ENCODE measurements at regions of chr16 and their contacts with region 1.

Region 1: GRCh38 chr16:70653809-70654771 is 7.7 kb downstream of the IL34 start:
- DNase-seq: peak; percentile 88
- ATAC-seq: peak; percentile 86
- H3K4me3 Mint-ChIP-seq: no peak overlapping the region
- H3K27ac Mint-ChIP-seq: no peak overlapping the region
- H3K4me1 Mint-ChIP-seq: peaks cover 4% of the 10 kb centered on the region
- H3K27me3 Mint-ChIP-seq: no peaks in the 10 kb centered on the region

Region 2: GRCh38 chr16:69796351-69797118 is 857.6 kb before region 1 on chr16:
- CTCF ChIA-PET with region 1: no interaction called
- POLR2A ChIA-PET with region 1: no interaction called
- intact Hi-C with region 1: loop called in 1 of 2 experiments (anchors 10 kb)
- DNase-seq: peak; percentile 30
- ATAC-seq: peak; percentile 86
- H3K4me3 Mint-ChIP-seq: no peak overlapping the region
- H3K27ac Mint-ChIP-seq: no peak overlapping the region
- H3K4me1 Mint-ChIP-seq: no peaks in the 10 kb centered on the region
- H3K27me3 Mint-ChIP-seq: no peaks in the 10 kb centered on the region

Region 3: DNA sequence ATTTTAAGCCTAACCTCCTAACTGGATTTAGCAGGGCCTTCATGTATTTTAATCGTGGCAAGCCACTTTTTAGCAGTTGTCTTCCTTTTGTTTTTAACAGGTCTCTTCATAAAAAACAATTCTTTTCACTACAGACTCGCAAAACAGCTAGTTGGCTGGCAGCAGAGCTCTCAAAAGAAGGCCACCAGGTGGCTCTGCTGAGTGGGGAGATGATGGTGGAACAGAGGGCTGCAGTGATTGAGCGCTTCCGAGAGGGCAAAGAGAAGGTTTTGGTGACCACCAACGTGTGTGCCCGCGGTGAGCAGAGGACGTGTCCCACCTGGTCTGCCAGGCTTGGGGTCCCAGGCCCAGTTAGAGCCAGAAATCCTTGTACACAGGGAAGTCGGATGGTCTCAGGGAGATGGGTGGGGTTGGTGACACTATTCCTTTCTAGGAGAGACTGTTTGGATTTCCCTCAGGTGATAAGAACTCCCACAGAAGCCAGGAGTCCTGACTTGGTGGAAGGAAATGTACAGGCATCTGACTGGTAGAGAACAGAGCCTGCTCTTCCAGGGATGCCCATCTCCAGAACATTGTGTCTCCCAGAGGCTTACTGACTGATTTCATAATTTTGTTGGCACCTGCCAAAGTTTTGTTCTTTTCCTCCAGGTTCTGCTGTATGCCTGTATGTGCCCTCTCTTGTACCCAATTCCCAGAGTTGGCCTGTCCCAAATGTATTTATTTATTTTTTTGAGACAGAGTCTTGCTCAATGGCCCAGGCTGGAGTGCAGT is 322.3 kb before region 1 on chr16:
- CTCF ChIA-PET with region 1: interaction called, 4 read pairs
- POLR2A ChIA-PET with region 1: no interaction called
- intact Hi-C with region 1: loop called in 1 of 2 experiments (anchors 1 kb)
- DNase-seq: peak; percentile 34
- ATAC-seq: no peak
- H3K4me3 Mint-ChIP-seq: no peak overlapping the region
- H3K27ac Mint-ChIP-seq: no peak overlapping the region
- H3K4me1 Mint-ChIP-seq: no peaks in the 10 kb centered on the region
- H3K27me3 Mint-ChIP-seq: no peaks in the 10 kb centered on the region

Region 4: GRCh38 chr16:70380861-70381603 is 273.1 kb before region 1 on chr16:
- CTCF ChIA-PET with region 1: interaction called, 8 read pairs
- POLR2A ChIA-PET with region 1: no interaction called
- intact Hi-C with region 1: loop called (anchors 5 kb)
- DNase-seq: peak; percentile 98
- ATAC-seq: peak; percentile 93
- H3K4me3 Mint-ChIP-seq: peak overlapping the region; percentile 86
- H3K27ac Mint-ChIP-seq: peak overlapping the region; percentile 91
- H3K4me1 Mint-ChIP-seq: peaks cover 12% of the 10 kb centered on the region
- H3K27me3 Mint-ChIP-seq: no peaks in the 10 kb centered on the region

Region 5: GRCh38 chr16:70508752-70509151 is 145.3 kb before region 1 on chr16:
- CTCF ChIA-PET with region 1: no interaction called
- POLR2A ChIA-PET with region 1: no interaction called
- intact Hi-C with region 1: loop called in 1 of 2 experiments (anchors 2 kb)
- DNase-seq: no peak
- ATAC-seq: no peak
- H3K4me3 Mint-ChIP-seq: no peak overlapping the region
- H3K27ac Mint-ChIP-seq: peak overlapping the region; percentile 20
- H3K4me1 Mint-ChIP-seq: peaks cover 8% of the 10 kb centered on the region
- H3K27me3 Mint-ChIP-seq: no peaks in the 10 kb centered on the region

Region 6: GRCh38 chr16:70576431-70577255 is 77.4 kb before region 1 on chr16:
- CTCF ChIA-PET with region 1: interaction called, 4 read pairs
- POLR2A ChIA-PET with region 1: no interaction called
- intact Hi-C with region 1: loop called (anchors 5 kb)
- DNase-seq: no peak
- ATAC-seq: peak; percentile 43
- H3K4me3 Mint-ChIP-seq: no peak overlapping the region
- H3K27ac Mint-ChIP-seq: peak overlapping the region; percentile 51
- H3K4me1 Mint-ChIP-seq: peaks cover 21% of the 10 kb centered on the region
- H3K27me3 Mint-ChIP-seq: no peaks in the 10 kb centered on the region

Region 7: DNA sequence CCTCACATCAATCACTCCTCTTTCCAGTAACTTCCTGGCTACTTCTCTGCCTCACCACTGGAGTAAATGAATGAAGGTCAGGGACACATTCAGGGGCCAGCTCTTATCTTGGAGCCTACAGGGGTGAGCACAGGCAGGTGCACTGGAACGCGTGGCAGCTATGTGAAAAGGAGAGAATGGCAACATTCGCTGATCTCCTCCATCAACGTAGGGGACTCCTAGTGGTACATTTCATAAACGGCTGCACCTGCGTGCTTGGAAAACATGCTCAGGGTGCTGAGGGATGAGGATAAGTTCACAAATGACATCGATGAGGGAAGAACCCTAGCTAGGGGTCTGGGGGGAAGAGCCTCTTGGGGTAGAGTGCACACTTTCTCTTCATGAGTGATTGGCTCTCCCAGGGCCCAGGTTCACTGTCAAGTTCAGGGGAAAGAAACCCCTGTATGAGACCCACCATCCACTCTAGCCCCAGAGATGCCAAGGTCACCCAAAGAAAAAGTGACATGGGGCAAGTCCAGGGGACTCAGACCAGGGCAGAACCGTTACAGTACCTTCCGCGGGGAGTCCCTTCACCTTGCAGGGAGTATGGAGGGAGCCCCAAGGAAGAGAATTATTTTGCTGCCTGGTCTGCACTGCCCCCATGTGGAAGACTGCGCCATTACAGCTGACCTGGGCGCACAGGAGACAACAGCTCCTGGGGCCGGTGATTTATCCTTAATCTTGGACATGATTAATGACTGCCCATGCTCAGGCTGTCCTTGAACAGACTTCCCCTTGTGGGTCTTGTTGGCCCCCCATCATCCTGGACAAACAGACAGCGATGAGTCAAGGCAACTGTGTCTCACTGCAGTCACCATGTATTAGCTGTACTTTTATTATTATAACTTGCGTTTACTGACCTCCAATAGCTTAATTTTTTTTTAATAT is 116.8 kb after region 1 on chr16:
- CTCF ChIA-PET with region 1: interaction called, 24 read pairs
- POLR2A ChIA-PET with region 1: no interaction called
- intact Hi-C with region 1: no loop called
- DNase-seq: peak; percentile 81
- ATAC-seq: peak; percentile 94
- H3K4me3 Mint-ChIP-seq: no peak overlapping the region
- H3K27ac Mint-ChIP-seq: no peak overlapping the region
- H3K4me1 Mint-ChIP-seq: no peaks in the 10 kb centered on the region
- H3K27me3 Mint-ChIP-seq: no peaks in the 10 kb centered on the region

Measured in activated CD4-positive, alpha-beta T cell treated with anti-CD3 and anti-CD28 coated beads for 36 hours (primary cell).